ENCODE measurements at regions of chr10 and their contacts with region 1.

Region 1: DNA sequence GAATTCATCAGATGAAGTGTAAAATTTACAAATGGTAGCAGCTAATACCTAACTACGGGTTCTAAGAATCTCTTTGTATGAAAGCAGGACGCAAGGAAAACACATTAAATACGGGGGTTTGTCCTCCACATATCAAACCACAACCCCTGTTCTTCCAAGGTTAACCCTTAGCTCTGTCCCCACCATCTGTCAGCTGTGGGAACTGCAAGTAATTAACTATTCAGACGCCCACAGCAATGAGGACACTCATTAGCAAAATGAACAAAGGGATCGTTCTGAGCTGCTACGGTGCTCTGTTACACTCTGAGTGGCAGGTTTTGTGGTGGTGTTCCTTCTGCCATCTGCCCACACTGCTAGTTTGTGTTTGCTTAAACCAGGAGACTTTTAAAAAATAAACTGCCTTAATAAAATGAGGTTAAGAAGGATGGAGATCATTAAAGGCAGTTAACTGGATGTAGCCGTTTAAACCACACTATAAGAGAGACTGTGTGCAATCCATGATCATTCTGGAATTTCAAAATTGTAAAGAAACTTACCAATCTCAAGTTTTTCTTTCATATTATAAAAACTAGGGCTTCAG is 51.4 kb downstream of the C10orf67 start:
- DNase-seq: peak; percentile 20
- H3K4me3 ChIP-seq: no peak overlapping the region
- H3K27ac ChIP-seq: no peak overlapping the region
- H3K4me1 ChIP-seq: no peaks in the 10 kb centered on the region
- H3K27me3 ChIP-seq: no peaks in the 10 kb centered on the region
- CTCF ChIP-seq: peak; percentile 77 to 87

Region 2: DNA sequence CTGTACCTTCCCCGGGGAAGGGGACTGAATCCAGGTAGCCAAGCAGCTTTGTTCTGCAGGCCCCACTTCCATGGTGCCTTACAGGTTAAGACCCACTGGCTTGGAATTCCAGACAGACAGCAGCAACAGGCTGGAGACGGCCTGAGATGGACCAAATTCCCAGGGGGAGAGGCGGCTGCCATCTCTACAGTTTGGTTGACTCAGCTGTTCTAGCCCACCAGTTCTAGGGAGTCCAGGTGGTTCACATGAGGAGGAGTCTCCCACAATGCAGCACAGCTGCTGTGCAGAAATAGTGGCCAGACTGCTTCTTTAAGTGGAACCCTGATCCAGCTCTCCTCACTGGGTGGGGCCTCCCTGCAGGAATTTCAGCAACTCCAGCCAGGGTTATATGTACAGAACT is 22.7 kb before region 1 on chr10:
- CTCF ChIA-PET with region 1: no interaction called
- dilution Hi-C with region 1: no loop called
- in situ Hi-C with region 1: no loop called
- intact Hi-C with region 1: no loop called
- DNase-seq: no peak
- H3K4me3 ChIP-seq: no peak overlapping the region
- H3K27ac ChIP-seq: no peak overlapping the region
- H3K4me1 ChIP-seq: no peaks in the 10 kb centered on the region
- H3K27me3 ChIP-seq: no peaks in the 10 kb centered on the region
- CTCF ChIP-seq: no peak

Region 3: GRCh38 chr10:23368816-23369640 is 75.8 kb after region 1 on chr10:
- CTCF ChIA-PET with region 1: no interaction called
- dilution Hi-C with region 1: no loop called
- in situ Hi-C with region 1: no loop called
- intact Hi-C with region 1: no loop called
- DNase-seq: no peak
- H3K4me3 ChIP-seq: no peak overlapping the region
- H3K27ac ChIP-seq: no peak overlapping the region
- H3K4me1 ChIP-seq: peaks cover 55% of the 10 kb centered on the region
- H3K27me3 ChIP-seq: no peaks in the 10 kb centered on the region
- CTCF ChIP-seq: no peak

Region 4: GRCh38 chr10:23656735-23657134 is 363.5 kb after region 1 on chr10:
- CTCF ChIA-PET with region 1: interaction called, 3 read pairs
- dilution Hi-C with region 1: no loop called
- in situ Hi-C with region 1: no loop called
- intact Hi-C with region 1: loop called (anchors 5 kb)
- DNase-seq: peak; percentile 11
- H3K4me3 ChIP-seq: no peak overlapping the region
- H3K27ac ChIP-seq: no peak overlapping the region
- H3K4me1 ChIP-seq: no peaks in the 10 kb centered on the region
- H3K27me3 ChIP-seq: no peaks in the 10 kb centered on the region
- CTCF ChIP-seq: peak; percentile 59 to 70

Region 5: DNA sequence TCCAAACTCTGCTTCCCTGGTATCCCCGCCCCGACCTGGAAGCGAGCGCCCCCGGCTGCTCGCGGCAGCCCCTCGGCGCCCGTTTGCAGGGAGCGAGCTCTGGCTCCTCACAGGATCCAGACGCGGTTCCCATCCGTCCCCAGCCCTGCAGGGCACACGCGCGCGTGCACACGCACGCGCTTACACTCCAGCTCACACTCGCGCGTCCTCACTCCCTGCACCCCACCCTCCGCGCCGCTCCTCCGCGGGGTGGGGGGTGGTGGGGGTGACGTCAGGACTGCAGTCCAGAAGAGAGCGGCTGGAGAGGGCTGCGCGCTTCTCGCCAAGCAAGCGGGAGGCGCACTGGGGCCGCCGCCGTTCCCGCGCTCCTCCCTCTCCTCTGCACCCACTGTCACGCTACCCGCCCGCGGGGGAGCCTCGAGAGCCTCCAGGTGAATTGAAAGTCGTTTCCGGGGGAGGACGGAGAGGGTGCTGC is 401.2 kb after region 1 on chr10:
- CTCF ChIA-PET with region 1: no interaction called
- dilution Hi-C with region 1: no loop called
- in situ Hi-C with region 1: loop called in 1 of 2 experiments (anchors 10 kb)
- intact Hi-C with region 1: no loop called
- DNase-seq: peak; percentile 23
- H3K4me3 ChIP-seq: no peak overlapping the region
- H3K27ac ChIP-seq: no peak overlapping the region
- H3K4me1 ChIP-seq: no peaks in the 10 kb centered on the region
- H3K27me3 ChIP-seq: peaks cover 30% of the 10 kb centered on the region
- CTCF ChIP-seq: no peak

Region 6: GRCh38 chr10:23702977-23703414 is 409.8 kb after region 1 on chr10:
- CTCF ChIA-PET with region 1: no interaction called
- dilution Hi-C with region 1: no loop called
- in situ Hi-C with region 1: loop called in 1 of 2 experiments (anchors 10 kb)
- intact Hi-C with region 1: loop called (anchors 1 kb)
- DNase-seq: peak; percentile 47
- H3K4me3 ChIP-seq: no peak overlapping the region
- H3K27ac ChIP-seq: no peak overlapping the region
- H3K4me1 ChIP-seq: no peaks in the 10 kb centered on the region
- H3K27me3 ChIP-seq: no peaks in the 10 kb centered on the region
- CTCF ChIP-seq: peak; percentile 76 to 84

Region 7: GRCh38 chr10:23981520-23982309 is 688.5 kb after region 1 on chr10:
- CTCF ChIA-PET with region 1: no interaction called
- dilution Hi-C with region 1: no loop called
- in situ Hi-C with region 1: no loop called
- intact Hi-C with region 1: loop called (anchors 10 kb)
- DNase-seq: peak; percentile 17
- H3K4me3 ChIP-seq: no peak overlapping the region
- H3K27ac ChIP-seq: no peak overlapping the region
- H3K4me1 ChIP-seq: no peaks in the 10 kb centered on the region
- H3K27me3 ChIP-seq: no peaks in the 10 kb centered on the region
- CTCF ChIP-seq: peak in 1 of 2 donors; percentile 12

Measured in mammary epithelial cell (primary cell).